Right lobe of liver (tissue), 6 donors: ENCODE measurements at regions of chr2 and their contacts with region 1.

Region 1: DNA sequence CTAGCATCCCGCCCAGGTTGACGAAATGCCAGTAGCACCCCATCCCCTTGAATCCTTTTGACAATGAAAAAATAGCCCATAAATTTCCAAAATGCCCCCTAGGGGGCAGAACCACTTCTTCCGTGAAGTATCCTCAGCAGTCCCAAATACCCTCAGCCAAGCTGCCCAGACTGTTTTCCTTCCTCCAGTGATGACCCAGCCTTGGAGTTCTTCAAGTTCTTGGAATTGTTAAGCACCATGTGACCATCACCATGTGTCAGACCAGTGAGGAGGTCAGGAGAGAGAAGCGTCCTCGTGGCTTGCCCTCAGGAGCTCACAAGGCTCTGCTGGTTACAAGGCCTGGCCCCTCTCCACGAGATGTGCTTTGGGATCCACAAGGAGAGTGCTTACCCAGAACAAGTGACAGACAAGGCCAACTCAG is 1.4 kb upstream of the SLC23A3 start:
- DNase-seq: peak in 1 of 3 donors; percentile 54
- ATAC-seq: peak; percentile 62 to 71 (median 66)
- H3K4me3 ChIP-seq: no peak overlapping the region
- H3K27ac ChIP-seq: peak overlapping the region in 2 of 3 donors; percentile 2 to 18
- H3K4me1 ChIP-seq: peaks cover 0 to 29% (median 6%) of the 10 kb centered on the region in 4 donors
- H3K27me3 ChIP-seq: no peaks in the 10 kb centered on the region
- CTCF ChIP-seq: peak; percentile 53 to 74 (median 68)
- POLR2A ChIP-seq: no peak

Region 2: DNA sequence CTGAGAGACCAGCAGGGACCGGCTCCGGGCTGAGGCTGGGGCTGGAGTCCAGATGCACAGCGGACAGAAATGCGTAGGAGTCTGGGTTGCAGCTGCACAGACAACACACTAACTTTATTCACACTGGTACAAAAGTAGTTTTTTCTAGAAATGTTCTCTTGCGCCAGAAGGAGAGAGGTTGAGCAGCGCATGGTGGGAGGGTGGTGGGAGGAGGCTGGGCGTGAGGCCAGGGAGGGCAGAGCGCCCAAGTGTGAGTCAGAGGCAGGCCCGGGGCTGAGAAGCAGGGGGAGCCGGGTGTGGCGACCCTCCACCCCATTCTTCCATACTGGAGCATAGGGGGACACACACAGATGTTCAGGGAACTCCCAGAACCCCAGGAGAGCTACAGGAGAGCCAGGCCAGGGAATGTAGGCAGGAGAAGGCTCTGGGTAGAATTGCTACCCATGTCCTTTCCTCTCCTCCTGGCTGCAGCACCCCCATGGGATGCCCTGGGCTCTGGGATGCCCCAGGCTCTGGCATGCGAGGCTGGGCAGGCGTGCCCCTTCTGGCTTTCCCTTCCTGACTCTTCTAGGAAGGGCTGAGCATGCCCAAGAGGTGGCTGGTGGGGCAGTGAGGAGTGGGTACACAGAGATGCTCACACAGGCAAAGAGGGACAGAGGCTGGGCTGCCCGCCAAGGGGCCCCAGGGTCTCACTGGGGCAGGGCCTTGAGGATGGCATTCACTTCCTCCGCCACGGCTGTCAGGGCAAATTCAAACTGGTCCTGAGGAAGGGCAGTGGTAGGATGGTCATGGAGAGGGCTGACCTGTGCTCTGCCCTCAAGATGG is 118.5 kb after region 1 on chr2:
- intact Hi-C with region 1: no loop called
- DNase-seq: no peak
- ATAC-seq: peak in 1 of 4 donors; percentile 35
- H3K4me3 ChIP-seq: no peak overlapping the region
- H3K27ac ChIP-seq: no peak overlapping the region
- H3K4me1 ChIP-seq: no peaks in the 10 kb centered on the region
- H3K27me3 ChIP-seq: no peaks in the 10 kb centered on the region
- CTCF ChIP-seq: no peak
- POLR2A ChIP-seq: no peak

Region 3: GRCh38 chr2:219300022-219300421 is 128.8 kb after region 1 on chr2:
- intact Hi-C with region 1: loop called in 1 of 2 experiments (anchors 5 kb)
- DNase-seq: no peak
- ATAC-seq: no peak
- H3K4me3 ChIP-seq: no peak overlapping the region
- H3K27ac ChIP-seq: no peak overlapping the region
- H3K4me1 ChIP-seq: peaks cover 0 to 1% (median 0%) of the 10 kb centered on the region in 4 donors
- H3K27me3 ChIP-seq: no peaks in the 10 kb centered on the region
- CTCF ChIP-seq: no peak
- POLR2A ChIP-seq: no peak

Region 4: DNA sequence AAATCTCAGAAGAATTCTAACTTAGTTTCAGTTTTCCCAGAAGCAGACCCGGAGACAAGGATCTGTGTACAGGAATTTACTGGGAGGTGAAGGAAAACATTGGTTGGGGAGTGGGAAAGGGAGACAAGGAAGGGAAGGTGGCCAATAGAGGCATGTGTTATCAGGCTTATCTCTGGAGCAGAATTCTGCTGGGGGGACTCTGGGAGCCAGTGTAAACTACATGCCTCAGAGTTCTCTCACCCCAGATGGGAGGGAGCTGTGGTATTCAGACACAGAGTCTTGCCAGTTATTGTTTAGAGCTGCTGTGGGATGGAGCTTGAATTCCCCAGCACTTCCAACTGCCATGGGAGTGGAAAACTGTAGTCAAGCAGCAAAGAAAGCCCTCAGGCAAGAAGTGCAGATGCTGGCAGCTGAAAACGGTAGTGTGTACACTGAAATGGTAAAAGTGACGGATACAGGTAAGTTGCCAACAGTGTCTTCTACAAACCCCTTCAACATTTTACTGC is 197.5 kb after region 1 on chr2:
- intact Hi-C with region 1: no loop called
- DNase-seq: no peak
- ATAC-seq: peak in 3 of 4 donors; percentile 28 to 47 (median 45)
- H3K4me3 ChIP-seq: no peak overlapping the region
- H3K27ac ChIP-seq: no peak overlapping the region
- H3K4me1 ChIP-seq: no peaks in the 10 kb centered on the region
- H3K27me3 ChIP-seq: no peaks in the 10 kb centered on the region
- CTCF ChIP-seq: no peak
- POLR2A ChIP-seq: no peak